OCI-LY7 (cell line): ENCODE measurements at regions of chr5 and their contacts with region 1.

Region 1: DNA sequence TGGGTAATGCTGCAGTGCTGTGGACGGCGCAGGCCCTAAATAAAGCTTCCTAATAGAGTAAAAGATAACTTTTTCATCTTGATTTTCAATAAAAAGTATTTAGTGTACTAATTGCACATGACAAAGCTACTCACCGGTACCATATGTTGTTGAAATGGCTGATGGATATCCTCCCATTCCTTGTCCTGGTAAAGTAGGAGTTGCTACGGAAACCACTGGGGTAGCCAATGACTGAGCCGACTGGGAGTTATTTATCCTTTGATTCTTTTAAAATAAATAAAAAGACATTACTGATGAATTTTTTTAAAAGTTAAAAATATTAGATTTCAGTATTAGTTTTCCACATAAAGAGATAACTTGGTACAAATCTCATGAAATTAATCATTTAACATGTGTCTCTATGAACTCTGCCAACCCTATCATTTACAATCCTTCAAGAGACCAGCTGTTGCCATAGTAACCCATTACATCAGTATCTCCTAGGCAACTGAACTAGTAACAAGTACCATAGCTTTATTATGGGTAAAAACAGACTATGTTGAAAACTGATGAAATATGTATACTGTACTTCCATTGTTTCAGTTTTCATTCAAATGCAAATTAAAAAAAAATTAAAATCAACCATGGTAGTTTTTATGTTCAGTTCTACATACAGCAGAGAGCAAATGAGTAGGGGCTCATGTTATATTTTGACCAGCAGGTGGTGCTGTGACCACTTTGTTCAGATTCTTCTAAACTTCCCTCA is 153.7 kb downstream of the MEF2C start:
- DNase-seq: peak; percentile 82
- H3K4me3 ChIP-seq: no peak overlapping the region
- H3K27ac ChIP-seq: no peak overlapping the region
- H3K4me1 ChIP-seq: peaks cover 27% of the 10 kb centered on the region
- CTCF ChIP-seq: peak; percentile 96

Region 2: GRCh38 chr5:88746438-88746882 is 17.2 kb after region 1 on chr5:
- CTCF ChIA-PET with region 1: interaction called, 3 read pairs
- POLR2A ChIA-PET with region 1: interaction called, 19 read pairs
- intact Hi-C with region 1: no loop called
- DNase-seq: peak; percentile 64
- H3K4me3 ChIP-seq: peak overlapping the region; percentile 24
- H3K27ac ChIP-seq: peak overlapping the region; percentile 44
- H3K4me1 ChIP-seq: peaks cover 18% of the 10 kb centered on the region
- CTCF ChIP-seq: no peak

Region 3: GRCh38 chr5:88826646-88827585 is 97.7 kb after region 1 on chr5:
- CTCF ChIA-PET with region 1: interaction called, 4 read pairs
- POLR2A ChIA-PET with region 1: interaction called, 21 read pairs
- intact Hi-C with region 1: loop called (anchors 1 kb)
- DNase-seq: peak; percentile 83
- H3K4me3 ChIP-seq: peak overlapping the region; percentile 54
- H3K27ac ChIP-seq: peak overlapping the region; percentile 78
- H3K4me1 ChIP-seq: peaks cover 89% of the 10 kb centered on the region
- CTCF ChIP-seq: no peak

Region 4: DNA sequence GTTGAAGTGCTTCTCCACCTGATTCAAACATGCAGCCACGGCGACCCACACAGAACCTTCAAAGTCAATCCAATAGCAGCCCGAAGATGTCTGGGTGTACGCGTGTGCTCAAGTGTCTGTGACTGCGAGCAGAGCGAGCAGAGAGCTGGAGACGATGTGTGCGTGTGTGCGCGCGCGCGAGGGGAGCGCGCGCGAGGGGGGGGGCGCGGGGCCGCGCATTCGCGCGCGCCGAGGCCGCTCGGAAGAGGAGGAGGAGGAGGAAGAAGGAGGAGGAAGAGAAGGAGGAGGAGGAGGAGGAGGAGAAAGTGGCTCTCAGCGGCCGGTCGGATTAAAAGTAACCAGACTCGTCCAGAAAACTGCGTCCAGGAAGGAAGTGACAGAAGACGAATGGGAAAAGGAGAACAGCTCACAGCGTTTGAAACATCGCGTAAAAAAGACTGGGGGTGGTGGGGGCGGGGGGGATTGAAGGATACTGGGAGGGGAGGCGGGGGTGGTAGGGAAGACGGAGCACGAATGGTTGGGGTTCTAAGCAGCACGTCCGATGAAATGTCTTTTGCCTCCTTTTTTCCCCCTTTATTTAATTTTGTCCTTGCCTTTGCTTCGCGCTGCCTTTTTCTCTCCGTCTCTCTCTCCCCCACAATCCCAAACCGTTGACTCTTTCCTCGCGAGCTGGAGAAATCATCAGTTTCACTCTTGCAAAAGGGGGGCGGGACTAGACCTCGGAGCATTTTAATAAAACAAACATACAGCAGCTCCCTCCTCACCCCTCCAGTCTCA is 154.0 kb after region 1 on chr5 and contains the start of gene MEF2C:
- CTCF ChIA-PET with region 1: no interaction called
- POLR2A ChIA-PET with region 1: interaction called, 11 read pairs
- intact Hi-C with region 1: loop called (anchors 1 kb)
- DNase-seq: peak; percentile 78
- H3K4me3 ChIP-seq: peak within 1 kb of the TSS; percentile 73
- H3K27ac ChIP-seq: peak within 1 kb of the TSS; percentile 2
- H3K4me1 ChIP-seq: peaks cover 39% of the 10 kb centered on the region
- CTCF ChIP-seq: no peak
- total RNA-seq, gene MEF2C: 5.5 and 9.5 TPM in 2 replicates

Region 5: DNA sequence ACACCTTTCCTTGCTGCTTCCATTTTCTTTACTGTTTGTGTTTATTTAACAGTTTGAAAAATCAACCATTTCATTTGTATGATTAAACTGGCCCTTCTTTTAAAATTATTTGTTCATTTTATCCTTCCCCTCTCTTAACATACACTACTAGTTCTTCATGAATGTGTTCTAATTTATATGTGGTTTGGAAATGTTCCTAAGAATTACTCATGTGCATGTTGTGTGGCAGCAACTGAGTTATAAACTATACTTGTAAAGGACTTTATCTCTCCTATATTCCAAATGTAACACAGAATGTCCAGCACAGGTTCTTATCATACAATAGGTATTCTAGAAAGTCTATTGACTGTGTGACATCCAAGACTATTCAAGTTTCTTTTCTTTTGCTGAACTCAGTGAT is 511.9 kb after region 1 on chr5:
- CTCF ChIA-PET with region 1: no interaction called
- POLR2A ChIA-PET with region 1: no interaction called
- intact Hi-C with region 1: loop called (anchors 10 kb)
- DNase-seq: no peak
- H3K4me3 ChIP-seq: no peak overlapping the region
- H3K27ac ChIP-seq: no peak overlapping the region
- H3K4me1 ChIP-seq: no peaks in the 10 kb centered on the region
- CTCF ChIP-seq: no peak